Gastrocnemius medialis (tissue), 4 donors: ENCODE measurements at regions of chr13 and their contacts with region 1.

Region 1: DNA sequence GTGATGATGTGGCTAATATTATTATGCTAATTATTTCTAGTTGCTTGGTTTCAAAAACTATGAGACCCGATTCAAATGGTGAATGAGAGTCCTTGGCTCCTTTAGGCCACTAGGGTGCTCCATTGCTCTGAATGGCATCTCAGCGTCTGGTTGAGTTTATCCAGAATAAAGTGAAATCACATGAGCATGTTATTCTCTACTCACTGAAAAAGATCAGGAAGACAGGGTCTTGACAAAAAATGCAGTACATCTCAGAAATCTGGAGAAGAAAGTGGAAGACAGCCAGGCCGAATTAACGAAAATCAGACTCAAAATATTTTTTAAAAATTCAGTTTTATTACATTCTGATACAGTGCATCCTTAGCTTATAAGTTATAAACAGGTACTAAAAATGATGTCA is 516.2 kb downstream of the MYO16 start:
- DNase-seq: peak in 1 of 2 donors; percentile 10
- ATAC-seq: peak; percentile 80 to 83
- H3K4me3 ChIP-seq: no peak overlapping the region
- H3K27ac ChIP-seq: no peak overlapping the region
- H3K4me1 ChIP-seq: no peaks in the 10 kb centered on the region
- H3K27me3 ChIP-seq: peaks cover 6 to 14% (median 9%) of the 10 kb centered on the region in 3 donors
- CTCF ChIP-seq: peak; percentile 47 to 65 (median 61)
- POLR2A ChIP-seq: no peak

Region 2: GRCh38 chr13:108993346-108993745 is 152.3 kb before region 1 on chr13:
- in situ Hi-C with region 1: no loop called
- intact Hi-C with region 1: no loop called
- DNase-seq: no peak
- ATAC-seq: no peak
- H3K4me3 ChIP-seq: no peak overlapping the region
- H3K27ac ChIP-seq: no peak overlapping the region
- H3K4me1 ChIP-seq: no peaks in the 10 kb centered on the region
- H3K27me3 ChIP-seq: no peaks in the 10 kb centered on the region
- CTCF ChIP-seq: no peak
- POLR2A ChIP-seq: no peak

Region 3: GRCh38 chr13:109126891-109127641 is 18.6 kb before region 1 on chr13:
- in situ Hi-C with region 1: no loop called
- intact Hi-C with region 1: no loop called
- DNase-seq: no peak
- ATAC-seq: no peak
- H3K4me3 ChIP-seq: no peak overlapping the region
- H3K27ac ChIP-seq: no peak overlapping the region
- H3K4me1 ChIP-seq: no peaks in the 10 kb centered on the region
- H3K27me3 ChIP-seq: no peaks in the 10 kb centered on the region
- CTCF ChIP-seq: no peak
- POLR2A ChIP-seq: no peak

Region 4: GRCh38 chr13:109243311-109243951 is 97.8 kb after region 1 on chr13:
- in situ Hi-C with region 1: no loop called
- intact Hi-C with region 1: loop called (anchors 5 kb)
- DNase-seq: peak; percentile 72 to 73
- ATAC-seq: peak; percentile 95 to 97
- H3K4me3 ChIP-seq: no peak overlapping the region
- H3K27ac ChIP-seq: peak overlapping the region; percentile 79 to 83 (median 82)
- H3K4me1 ChIP-seq: peaks cover 3 to 15% of the 10 kb centered on the region in 2 donors
- H3K27me3 ChIP-seq: no peaks in the 10 kb centered on the region
- CTCF ChIP-seq: no peak
- POLR2A ChIP-seq: no peak

Region 5: DNA sequence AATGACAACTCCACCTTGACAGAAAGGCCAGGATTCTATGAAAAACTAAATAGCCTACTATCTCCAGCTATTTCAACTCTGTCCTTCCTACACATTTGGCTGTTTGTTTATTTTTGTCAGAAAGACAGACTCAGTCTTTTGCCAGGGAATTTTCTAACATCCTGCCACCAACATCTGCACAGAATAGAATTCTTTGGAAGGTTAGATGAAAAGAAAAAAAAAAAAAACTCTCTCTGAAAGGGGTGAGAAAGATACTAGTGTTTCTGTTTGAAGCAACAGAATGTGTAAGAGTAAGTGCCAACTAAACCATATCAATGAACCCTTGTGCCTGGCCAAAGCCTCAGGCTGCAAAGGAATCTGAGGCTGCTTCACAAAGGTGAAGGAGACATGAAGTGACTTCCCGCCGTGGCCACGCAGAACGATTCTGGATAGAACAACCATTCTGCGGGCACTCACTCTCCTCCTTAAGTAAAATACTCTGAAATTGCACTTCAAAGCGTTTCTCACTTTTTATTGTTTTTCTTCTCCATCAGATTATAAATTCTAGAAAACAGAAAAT is 142.6 kb after region 1 on chr13:
- in situ Hi-C with region 1: no loop called
- intact Hi-C with region 1: loop called (anchors 5 kb)
- DNase-seq: no peak
- ATAC-seq: no peak
- H3K4me3 ChIP-seq: no peak overlapping the region
- H3K27ac ChIP-seq: no peak overlapping the region
- H3K4me1 ChIP-seq: no peaks in the 10 kb centered on the region
- H3K27me3 ChIP-seq: no peaks in the 10 kb centered on the region
- CTCF ChIP-seq: no peak
- POLR2A ChIP-seq: no peak